Activated CD4-positive, alpha-beta T cell treated with anti-CD3 and anti-CD28 coated beads for 36 hours (primary cell): ENCODE measurements at regions of chr3 and their contacts with region 1.

Region 1: GRCh38 chr3:10758304-10759061 is 57.5 kb upstream of the SLC6A11 start:
- DNase-seq: peak; percentile 75
- ATAC-seq: peak; percentile 72
- H3K4me3 Mint-ChIP-seq: no peak overlapping the region
- H3K27ac Mint-ChIP-seq: no peak overlapping the region
- H3K4me1 Mint-ChIP-seq: peaks cover 5% of the 10 kb centered on the region
- H3K27me3 Mint-ChIP-seq: peaks cover 34% of the 10 kb centered on the region

Region 2: DNA sequence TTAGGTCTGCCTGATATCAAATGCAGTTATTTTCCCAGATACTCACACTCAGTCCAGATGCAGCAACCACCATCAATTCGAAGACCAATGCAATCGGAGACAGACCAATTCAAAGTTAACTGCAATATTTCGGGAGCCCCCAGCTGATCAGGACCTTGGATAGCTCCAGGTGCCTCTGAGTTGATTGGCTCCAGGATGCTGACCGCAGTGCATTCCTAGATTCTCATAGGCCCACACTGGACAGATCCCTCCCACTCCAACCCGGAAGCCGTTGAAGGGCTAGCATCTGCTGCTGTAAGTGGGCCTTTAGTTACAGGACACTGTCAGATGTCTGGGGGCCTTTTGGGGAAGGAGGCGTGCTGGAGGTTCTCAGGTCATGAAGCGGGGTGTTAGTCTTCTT is 163.6 kb before region 1 on chr3:
- CTCF ChIA-PET with region 1: no interaction called
- POLR2A ChIA-PET with region 1: no interaction called
- intact Hi-C with region 1: loop called in 1 of 2 experiments (anchors 5 kb)
- DNase-seq: peak; percentile 70
- ATAC-seq: peak; percentile 83
- H3K4me3 Mint-ChIP-seq: no peak overlapping the region
- H3K27ac Mint-ChIP-seq: no peak overlapping the region
- H3K4me1 Mint-ChIP-seq: no peaks in the 10 kb centered on the region
- H3K27me3 Mint-ChIP-seq: peaks cover 36% of the 10 kb centered on the region

Region 3: DNA sequence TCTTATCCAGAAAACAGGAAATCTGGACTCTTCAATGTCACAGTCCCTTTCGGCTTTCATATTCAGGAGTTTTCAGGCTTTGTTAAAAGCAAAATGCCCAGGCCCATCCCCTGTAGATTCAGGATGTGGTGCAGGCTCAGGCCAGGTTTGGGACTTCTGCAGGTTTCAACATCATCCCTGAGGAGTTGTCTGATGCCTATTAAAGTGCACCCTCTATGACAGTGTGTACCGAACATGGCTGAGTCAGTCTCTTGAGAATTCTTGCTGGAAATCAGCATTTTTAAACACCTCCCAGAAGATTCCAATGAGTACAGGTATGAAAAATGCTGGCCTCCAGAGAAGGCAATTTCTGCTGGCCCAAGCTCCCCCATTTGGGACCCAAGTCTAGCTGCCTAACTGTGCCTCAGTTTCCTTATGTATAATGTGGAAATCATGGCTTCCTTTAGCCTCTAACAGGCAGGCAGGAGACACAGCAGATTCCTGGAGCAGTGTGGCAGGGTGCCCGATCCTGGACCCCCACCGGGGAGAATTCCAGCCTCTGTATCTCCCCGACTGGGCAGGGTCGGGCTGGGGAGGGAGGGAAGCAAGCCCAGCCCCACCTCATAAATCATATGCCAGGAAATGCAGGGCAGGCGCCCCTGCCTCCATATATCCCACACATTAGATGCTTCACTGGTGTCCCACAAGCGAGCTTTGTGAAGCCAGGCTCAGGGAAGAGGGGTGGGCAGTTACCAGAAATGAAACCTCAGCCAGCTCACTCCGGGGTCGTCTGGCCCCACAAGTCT is 13.2 kb after region 1 on chr3:
- CTCF ChIA-PET with region 1: interaction called, 35 read pairs
- POLR2A ChIA-PET with region 1: no interaction called
- intact Hi-C with region 1: no loop called
- DNase-seq: no peak
- ATAC-seq: no peak
- H3K4me3 Mint-ChIP-seq: no peak overlapping the region
- H3K27ac Mint-ChIP-seq: no peak overlapping the region
- H3K4me1 Mint-ChIP-seq: no peaks in the 10 kb centered on the region
- H3K27me3 Mint-ChIP-seq: peaks cover 18% of the 10 kb centered on the region

Region 4: DNA sequence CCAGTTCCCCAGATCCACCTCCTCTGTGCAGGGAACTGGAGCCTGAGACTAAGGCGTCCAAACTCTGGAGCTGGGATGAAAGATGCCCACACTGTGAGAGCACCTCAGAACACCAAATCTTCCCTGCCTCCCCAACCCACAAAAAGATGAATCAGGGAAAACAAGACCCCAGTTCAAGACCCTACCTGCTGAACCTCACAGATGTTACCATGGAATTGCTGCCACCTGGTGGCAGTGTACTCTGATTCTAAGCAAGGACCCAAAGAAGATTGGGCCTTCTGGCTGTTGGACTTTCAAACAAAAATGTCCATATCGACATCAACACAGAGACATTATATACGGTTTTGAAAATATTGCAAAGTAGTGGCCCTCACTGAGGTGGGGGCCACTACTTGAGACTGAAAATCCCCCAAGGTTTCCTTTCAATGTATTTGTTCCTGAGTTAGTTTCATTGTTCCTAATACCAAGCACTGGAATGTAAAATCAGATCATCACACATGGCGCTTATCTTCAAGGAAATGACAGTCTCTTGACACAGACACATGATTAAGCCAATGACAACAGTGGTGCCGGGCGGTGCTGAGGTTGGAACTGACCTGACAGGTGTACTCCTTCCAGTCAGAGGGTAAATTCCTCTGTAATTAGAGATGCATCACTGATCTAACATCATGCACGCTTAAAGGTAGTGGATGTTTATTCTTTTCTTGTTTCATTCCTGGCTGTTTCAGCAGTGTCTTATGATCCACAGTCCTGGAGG is 125.2 kb after region 1 on chr3:
- CTCF ChIA-PET with region 1: interaction called, 3 read pairs
- POLR2A ChIA-PET with region 1: no interaction called
- intact Hi-C with region 1: loop called (anchors 1 kb)
- DNase-seq: peak; percentile 37
- ATAC-seq: no peak
- H3K4me3 Mint-ChIP-seq: no peak overlapping the region
- H3K27ac Mint-ChIP-seq: no peak overlapping the region
- H3K4me1 Mint-ChIP-seq: no peaks in the 10 kb centered on the region
- H3K27me3 Mint-ChIP-seq: peaks cover 13% of the 10 kb centered on the region

Region 5: DNA sequence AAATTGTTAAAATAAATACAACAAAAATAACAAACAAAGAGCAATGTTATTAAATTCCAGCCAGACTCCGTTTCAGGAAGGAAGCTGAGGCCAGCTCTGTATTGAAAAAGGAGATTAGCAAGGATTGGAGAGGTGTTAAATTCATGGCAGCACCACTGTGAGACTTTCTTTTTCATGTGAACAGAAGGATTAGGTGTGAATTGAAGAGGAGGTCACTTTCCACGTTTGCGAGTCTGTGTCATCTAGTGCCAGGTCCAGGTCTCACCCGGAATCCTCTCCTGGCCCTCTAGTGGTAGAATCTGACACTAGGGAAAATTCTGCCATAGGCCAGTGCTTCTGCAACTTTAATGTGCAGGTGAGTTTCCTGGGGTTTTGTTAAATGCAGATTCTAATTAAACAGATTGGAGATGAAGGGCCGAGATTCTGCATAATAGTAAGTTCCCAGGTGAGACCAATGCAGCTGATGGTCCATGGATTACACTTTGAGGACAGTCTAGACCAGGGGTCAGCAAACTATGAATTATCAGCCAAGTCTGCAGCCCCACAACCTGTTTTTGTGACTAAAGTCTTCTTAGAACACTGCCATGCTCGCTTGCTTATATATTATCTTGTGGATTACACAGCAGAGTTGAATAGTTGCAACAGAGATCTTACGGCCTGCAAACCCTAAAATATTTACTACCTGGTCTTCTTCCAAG is 224.9 kb after region 1 on chr3:
- CTCF ChIA-PET with region 1: interaction called, 3 read pairs
- POLR2A ChIA-PET with region 1: no interaction called
- intact Hi-C with region 1: loop called in 1 of 2 experiments (anchors 2 kb)
- DNase-seq: peak; percentile 32
- ATAC-seq: no peak
- H3K4me3 Mint-ChIP-seq: no peak overlapping the region
- H3K27ac Mint-ChIP-seq: no peak overlapping the region
- H3K4me1 Mint-ChIP-seq: no peaks in the 10 kb centered on the region
- H3K27me3 Mint-ChIP-seq: peaks cover 15% of the 10 kb centered on the region

Region 6: DNA sequence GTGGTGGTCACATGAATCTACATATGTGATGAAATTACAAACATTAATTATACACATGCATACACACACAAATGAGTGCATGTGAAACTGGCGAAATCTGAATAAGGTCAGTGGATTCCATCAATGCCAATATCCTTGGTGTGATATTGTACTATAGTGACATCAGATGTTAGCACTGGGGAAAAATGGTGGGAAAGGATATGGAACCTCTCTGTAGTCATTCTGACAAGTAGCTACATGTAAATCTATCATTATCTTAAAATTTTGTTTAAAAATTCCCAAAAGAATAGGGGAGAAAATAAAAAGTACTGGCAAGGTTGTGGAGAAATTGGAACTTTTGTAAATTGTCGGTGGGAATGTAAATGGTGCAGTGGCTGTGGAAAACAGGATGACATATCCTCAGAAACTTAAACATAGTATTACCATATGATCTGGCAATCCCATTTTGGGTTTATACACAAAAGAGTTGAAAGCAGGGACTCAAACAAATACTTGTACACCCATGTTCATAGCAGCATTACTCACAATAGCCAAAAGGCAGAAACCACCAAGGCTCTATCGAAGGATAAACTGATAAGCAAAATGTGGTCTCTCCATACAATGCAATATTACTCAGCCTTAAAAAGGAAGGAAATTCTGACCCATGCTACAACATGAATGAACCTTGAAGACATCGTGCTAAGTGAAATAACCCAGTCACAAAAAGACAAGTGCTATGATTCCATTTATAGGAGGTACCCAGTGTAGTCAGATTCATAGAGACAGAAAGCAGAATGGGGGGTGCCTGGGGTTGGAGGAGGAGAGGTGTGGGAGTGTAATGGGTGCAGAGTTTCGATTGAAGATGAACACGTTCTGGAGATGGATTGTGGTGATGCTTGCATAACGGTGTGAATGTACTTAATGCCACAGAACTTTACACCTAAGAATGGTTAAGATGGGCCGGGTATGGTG is 370.5 kb after region 1 on chr3:
- CTCF ChIA-PET with region 1: no interaction called
- POLR2A ChIA-PET with region 1: no interaction called
- intact Hi-C with region 1: loop called in 1 of 2 experiments (anchors 1 kb)
- DNase-seq: peak; percentile 32
- ATAC-seq: peak; percentile 91
- H3K4me3 Mint-ChIP-seq: no peak overlapping the region
- H3K27ac Mint-ChIP-seq: no peak overlapping the region
- H3K4me1 Mint-ChIP-seq: peaks cover 6% of the 10 kb centered on the region
- H3K27me3 Mint-ChIP-seq: peaks cover 9% of the 10 kb centered on the region